Aorta (tissue), 5 donors: ENCODE measurements at regions of chr5 and their contacts with region 1.

Region 1: DNA sequence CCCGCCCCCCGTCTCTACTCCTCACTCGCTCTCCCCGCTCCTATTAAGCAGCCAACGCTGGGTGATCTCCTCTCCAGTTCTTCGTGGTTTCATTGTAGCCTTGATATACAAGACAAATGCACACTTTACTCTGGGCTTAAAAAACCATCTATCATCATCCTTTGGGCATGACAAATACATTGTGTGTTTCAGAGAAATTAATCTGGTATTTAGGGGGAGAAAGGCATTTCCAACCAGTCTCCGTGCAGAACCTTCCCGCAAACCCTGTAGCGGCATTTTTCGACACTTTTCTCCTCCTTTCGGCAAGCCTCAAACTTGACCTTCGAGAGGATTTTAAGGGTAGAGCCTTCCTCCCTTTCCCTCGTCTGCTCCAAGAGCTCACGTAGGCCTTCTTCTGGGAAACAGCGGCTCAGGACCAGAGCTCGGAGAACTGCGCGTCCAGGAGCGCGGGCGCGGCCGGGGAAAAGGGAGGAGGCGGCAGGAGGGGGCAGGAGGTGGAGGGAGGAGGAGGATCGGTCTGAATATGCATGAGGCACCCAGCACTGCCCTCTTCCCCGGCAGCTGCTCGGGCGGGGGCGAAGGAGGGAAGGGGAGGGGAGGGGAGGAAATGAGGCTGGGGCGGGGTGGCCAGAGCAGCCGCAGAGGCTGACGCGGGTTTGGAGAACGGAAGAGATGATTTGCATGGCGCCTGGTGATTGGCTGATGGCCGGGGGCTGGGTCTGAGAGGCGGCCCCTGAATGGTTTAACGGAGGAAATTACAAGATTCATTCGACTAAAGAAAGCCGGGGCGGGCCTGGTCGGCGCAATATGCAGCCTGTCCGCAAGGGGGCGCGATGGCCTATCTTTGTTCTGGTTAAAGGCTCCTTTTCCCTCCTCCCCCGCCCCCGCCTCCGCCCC is 127.5 kb downstream of the TMEM161B start:
- DNase-seq: peak; percentile 97 to 98
- ATAC-seq: peak; percentile 95
- H3K4me3 ChIP-seq: peak overlapping the region; percentile 85 to 96
- H3K27ac ChIP-seq: no peak overlapping the region
- H3K4me1 ChIP-seq: no peaks in the 10 kb centered on the region
- H3K27me3 ChIP-seq: no peaks in the 10 kb centered on the region

Region 2: GRCh38 chr5:87099246-87099925 is 1041.7 kb before region 1 on chr5:
- intact Hi-C with region 1: no loop called
- DNase-seq: no peak
- ATAC-seq: no peak
- H3K4me3 ChIP-seq: no peak overlapping the region
- H3K27ac ChIP-seq: no peak overlapping the region
- H3K4me1 ChIP-seq: no peaks in the 10 kb centered on the region
- H3K27me3 ChIP-seq: no peaks in the 10 kb centered on the region

Region 3: GRCh38 chr5:87412630-87413342 is 728.3 kb before region 1 on chr5 and contains the start of gene CCNH:
- intact Hi-C with region 1: loop called in 1 of 2 experiments (anchors 10 kb)
- DNase-seq: peak; percentile 98 to 99
- ATAC-seq: peak; percentile 99
- H3K4me3 ChIP-seq: peak within 1 kb of the TSS; percentile 52 to 65
- H3K27ac ChIP-seq: peak within 1 kb of the TSS; percentile 33 to 98
- H3K4me1 ChIP-seq: peaks cover 0 to 1% of the 10 kb centered on the region in 2 donors
- H3K27me3 ChIP-seq: no peaks in the 10 kb centered on the region
- total RNA-seq, gene CCNH: 83.4 to 96.9 TPM

Region 4: GRCh38 chr5:87780831-87781760 is 360.0 kb before region 1 on chr5:
- intact Hi-C with region 1: loop called in 1 of 2 experiments (anchors 5 kb)
- DNase-seq: peak; percentile 87 to 89
- ATAC-seq: peak; percentile 89
- H3K4me3 ChIP-seq: no peak overlapping the region
- H3K27ac ChIP-seq: no peak overlapping the region
- H3K4me1 ChIP-seq: no peaks in the 10 kb centered on the region
- H3K27me3 ChIP-seq: no peaks in the 10 kb centered on the region

Region 5: DNA sequence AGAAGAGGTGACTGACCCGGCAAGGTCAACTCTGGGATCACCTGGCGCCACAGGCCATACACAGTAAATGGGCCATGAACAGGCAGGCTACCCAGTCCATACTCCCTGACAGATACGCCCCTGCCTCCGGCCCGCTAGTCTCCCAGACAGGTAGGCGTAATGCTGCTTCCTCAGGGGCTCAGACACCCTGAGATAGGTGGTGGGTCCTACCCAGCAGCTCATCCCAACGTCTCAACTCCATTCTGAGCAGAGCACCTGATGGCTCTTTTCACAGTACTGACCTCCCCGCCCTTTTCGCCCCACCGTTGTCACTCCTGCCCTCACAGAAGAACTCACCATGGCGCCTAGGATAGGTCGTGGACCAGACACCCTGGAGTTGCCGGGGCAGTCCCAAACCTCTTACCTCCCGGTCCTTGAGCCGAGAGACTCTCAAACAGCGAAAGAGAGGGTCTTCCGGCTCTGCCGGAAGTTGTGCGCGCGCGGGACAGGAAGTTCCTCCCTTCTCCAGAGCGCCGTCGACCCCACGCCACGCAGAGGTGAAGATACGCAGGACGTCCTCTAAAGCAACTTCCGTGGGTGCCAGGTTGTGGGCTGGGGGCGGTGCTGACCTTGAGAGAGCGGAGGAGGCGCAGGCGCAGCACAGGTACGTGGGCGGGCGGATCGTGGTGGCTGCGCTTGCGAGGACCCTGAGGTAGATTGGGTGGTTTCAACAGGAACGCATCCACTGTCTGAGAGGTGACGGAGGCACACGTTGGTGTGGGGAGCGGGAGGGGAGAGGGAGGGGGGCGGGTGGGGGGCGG is 127.5 kb after region 1 on chr5 and contains the start of gene TMEM161B:
- intact Hi-C with region 1: loop called in 1 of 2 experiments (anchors 1 kb)
- DNase-seq: peak; percentile 92 to 95
- ATAC-seq: peak; percentile 96
- H3K4me3 ChIP-seq: peak within 1 kb of the TSS; percentile 73 to 83
- H3K27ac ChIP-seq: peak within 1 kb of the TSS in 1 of 2 donors; percentile 19
- H3K4me1 ChIP-seq: peaks cover 0 to 4% of the 10 kb centered on the region in 2 donors
- H3K27me3 ChIP-seq: no peaks in the 10 kb centered on the region
- total RNA-seq, gene TMEM161B: 15.9 to 18.8 TPM

Region 6: GRCh38 chr5:88674356-88675167 is 533.5 kb after region 1 on chr5:
- intact Hi-C with region 1: loop called in 1 of 2 experiments (anchors 5 kb)
- DNase-seq: peak; percentile 48 to 78
- ATAC-seq: peak; percentile 50
- H3K4me3 ChIP-seq: peak overlapping the region in 1 of 2 donors; percentile 18
- H3K27ac ChIP-seq: no peak overlapping the region
- H3K4me1 ChIP-seq: no peaks in the 10 kb centered on the region
- H3K27me3 ChIP-seq: peaks cover 0 to 3% of the 10 kb centered on the region in 2 donors

Region 7: DNA sequence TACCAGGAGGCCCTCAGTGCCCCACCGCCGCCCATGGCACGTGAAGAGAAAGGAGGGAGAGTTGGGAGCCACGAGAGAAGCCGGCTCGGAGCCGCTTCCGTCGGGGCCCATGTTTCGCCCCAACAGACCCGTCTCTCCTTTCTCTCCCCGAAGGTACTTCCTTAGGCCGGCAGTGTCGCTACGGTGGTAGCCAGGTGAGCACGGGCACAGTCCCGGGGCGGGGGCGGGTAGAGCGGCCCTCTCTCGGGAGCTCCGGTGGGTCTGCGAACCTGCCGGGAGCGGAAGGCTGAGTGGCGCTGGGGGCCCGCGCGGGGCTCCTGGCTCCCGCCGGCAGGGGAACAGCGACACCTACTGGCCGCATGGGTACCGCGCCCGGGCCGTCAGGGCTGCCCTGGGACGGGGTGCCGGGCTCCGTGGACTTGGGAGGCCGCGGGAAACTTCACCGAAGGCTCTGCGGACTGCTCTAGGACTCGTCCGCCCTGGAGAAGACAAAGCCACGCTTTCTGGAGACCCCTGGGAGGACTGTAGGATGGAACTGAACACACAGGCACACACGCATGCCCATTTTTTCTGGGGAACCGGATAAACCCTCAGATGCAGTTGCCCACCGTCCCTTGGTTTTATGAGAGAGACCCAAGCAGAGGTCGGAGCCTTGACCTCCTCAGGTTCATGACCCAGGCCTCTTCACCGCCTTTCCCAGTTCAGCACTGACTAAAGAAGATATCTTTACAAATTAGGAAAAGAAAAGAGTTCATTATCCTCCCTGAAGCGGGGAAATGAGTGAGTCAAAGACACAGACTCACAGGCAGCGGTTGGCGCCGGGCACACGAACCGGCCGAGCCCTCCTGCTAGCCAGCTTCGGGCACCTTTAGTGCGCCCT is 539.4 kb after region 1 on chr5:
- intact Hi-C with region 1: loop called in 1 of 2 experiments (anchors 10 kb)
- DNase-seq: peak; percentile 72 to 93
- ATAC-seq: peak; percentile 87
- H3K4me3 ChIP-seq: no peak overlapping the region
- H3K27ac ChIP-seq: no peak overlapping the region
- H3K4me1 ChIP-seq: no peaks in the 10 kb centered on the region
- H3K27me3 ChIP-seq: no peaks in the 10 kb centered on the region

Region 8: DNA sequence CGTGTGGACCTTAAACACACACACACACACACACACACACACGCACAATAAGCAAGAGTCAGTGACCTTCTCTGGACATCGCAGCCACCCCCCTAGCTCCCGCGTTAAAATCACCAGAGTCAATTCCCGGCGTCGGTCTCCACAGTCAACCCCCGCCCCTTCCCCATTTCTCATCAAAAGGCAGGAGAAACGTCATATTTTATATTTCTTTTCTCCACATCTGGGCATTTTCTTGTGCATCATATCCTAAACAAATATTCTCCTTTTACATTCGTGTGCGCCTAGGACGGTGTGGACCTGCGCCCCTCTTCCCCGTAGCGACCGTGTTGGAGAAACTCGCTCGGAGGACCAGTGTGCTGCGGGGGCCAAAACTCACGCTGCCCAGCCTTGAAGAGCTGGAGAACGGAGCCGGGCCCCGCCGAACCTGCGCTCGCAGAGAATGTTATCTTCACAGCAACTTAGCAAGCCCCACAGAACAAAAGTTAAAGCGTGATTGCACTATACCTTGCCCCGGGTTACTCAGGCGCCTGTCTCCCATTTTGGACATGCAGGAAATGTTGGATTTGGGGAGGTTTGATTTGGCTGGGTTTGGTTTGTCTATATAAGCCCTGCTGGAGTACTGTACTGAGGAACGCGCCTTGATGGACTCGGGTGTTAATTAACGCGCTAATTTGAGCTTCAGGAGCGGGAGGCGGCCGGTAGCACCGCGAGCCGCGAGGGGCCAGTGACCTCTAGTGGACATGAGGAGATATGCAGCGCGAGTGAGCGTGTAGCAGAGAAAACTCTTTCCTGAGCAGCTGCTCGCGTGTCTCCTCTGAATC is 549.5 kb after region 1 on chr5:
- intact Hi-C with region 1: loop called (anchors 5 to 10 kb)
- DNase-seq: peak; percentile 67 to 90
- ATAC-seq: peak; percentile 90
- H3K4me3 ChIP-seq: peak overlapping the region in 1 of 2 donors; percentile 9
- H3K27ac ChIP-seq: no peak overlapping the region
- H3K4me1 ChIP-seq: no peaks in the 10 kb centered on the region
- H3K27me3 ChIP-seq: peaks cover 2 to 3% of the 10 kb centered on the region in 2 donors